ENCODE measurements at regions of chr16 and their contacts with region 1.

Region 1: GRCh38 chr16:20741554-20742285 is at the start of gene THUMPD1:
- DNase-seq: peak; percentile 96 to 99 (median 97)
- ATAC-seq: peak; percentile 94
- H3K4me3 ChIP-seq: peak within 1 kb of the TSS; percentile 100
- H3K4me3 Mint-ChIP-seq: peak within 1 kb of the TSS; percentile 98
- H3K27ac ChIP-seq: peak within 1 kb of the TSS; percentile 100
- H3K27ac Mint-ChIP-seq: peak within 1 kb of the TSS; percentile 99
- H3K4me1 ChIP-seq: peaks cover 27% of the 10 kb centered on the region
- H3K4me1 Mint-ChIP-seq: peaks cover 26% of the 10 kb centered on the region
- H3K27me3 ChIP-seq: no peaks in the 10 kb centered on the region
- H3K27me3 Mint-ChIP-seq: no peaks in the 10 kb centered on the region
- CTCF ChIP-seq: peak; percentile 23
- total RNA-seq, gene THUMPD1: 105 to 109 TPM

Region 2: GRCh38 chr16:18801197-18801972 is 1940.3 kb before region 1 on chr16 and contains the start of gene ARL6IP1:
- CTCF ChIA-PET with region 1: no interaction called
- POLR2A ChIA-PET with region 1: no interaction called
- intact Hi-C with region 1: loop called in 1 of 2 experiments (anchors 10 kb)
- DNase-seq: peak; percentile 96 to 100 (median 99)
- ATAC-seq: peak; percentile 94
- H3K4me3 ChIP-seq: peak within 1 kb of the TSS; percentile 86 to 98
- H3K4me3 Mint-ChIP-seq: peak within 1 kb of the TSS; percentile 97
- H3K27ac ChIP-seq: peak within 1 kb of the TSS; percentile 84 to 92
- H3K27ac Mint-ChIP-seq: peak within 1 kb of the TSS; percentile 97
- H3K4me1 ChIP-seq: peaks cover 44% of the 10 kb centered on the region
- H3K4me1 Mint-ChIP-seq: peaks cover 50% of the 10 kb centered on the region
- H3K27me3 ChIP-seq: no peaks in the 10 kb centered on the region
- H3K27me3 Mint-ChIP-seq: no peaks in the 10 kb centered on the region
- CTCF ChIP-seq: peak; percentile 75
- total RNA-seq, gene ARL6IP1: 137 to 138 TPM

Region 3: DNA sequence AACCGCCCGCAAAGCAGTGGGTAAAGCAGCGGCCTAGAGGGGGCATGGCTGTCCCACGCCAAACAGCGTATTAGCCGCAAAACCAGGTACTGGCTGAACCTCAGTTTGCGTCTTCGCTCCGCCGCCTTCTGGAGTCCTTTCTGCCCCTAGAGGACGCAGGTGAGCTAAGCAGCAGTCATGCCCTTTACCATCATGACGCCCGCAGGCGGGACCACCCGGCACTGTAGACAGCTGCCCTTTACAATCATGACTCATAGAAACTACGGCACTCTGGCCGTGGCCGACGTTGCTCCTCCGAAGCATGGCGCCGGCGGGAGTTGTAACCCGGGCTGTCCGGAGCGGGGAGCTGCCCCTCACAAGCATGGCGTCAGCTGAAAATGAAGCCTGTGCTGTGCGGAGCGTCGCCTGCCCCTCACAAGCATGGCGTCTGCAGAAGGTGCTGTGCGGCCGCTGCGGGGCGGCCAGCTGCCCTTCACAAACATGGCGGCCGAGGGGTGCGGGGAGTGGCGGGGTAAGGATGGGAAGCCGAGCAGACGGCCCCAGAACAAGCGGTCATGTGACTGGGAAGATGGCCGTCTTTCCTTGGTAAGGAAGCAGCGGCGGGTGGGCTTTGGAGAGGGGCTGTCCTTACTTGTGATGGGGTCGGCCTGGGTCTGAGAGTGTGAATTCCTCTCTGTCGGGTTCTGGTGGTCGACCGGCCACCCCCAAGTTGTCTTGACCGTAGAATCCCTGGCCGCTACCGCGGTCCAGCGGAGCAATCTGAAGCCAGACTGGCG is 1186.4 kb before region 1 on chr16 and contains the start of gene VPS35L:
- CTCF ChIA-PET with region 1: interaction called, 3 read pairs
- POLR2A ChIA-PET with region 1: no interaction called
- intact Hi-C with region 1: loop called in 1 of 2 experiments (anchors 10 kb)
- DNase-seq: peak; percentile 91 to 99 (median 97)
- ATAC-seq: peak; percentile 95
- H3K4me3 ChIP-seq: peak within 1 kb of the TSS; percentile 67 to 73
- H3K4me3 Mint-ChIP-seq: peak within 1 kb of the TSS; percentile 97
- H3K27ac ChIP-seq: peak within 1 kb of the TSS; percentile 66 to 81
- H3K27ac Mint-ChIP-seq: peak within 1 kb of the TSS; percentile 96
- H3K4me1 ChIP-seq: peaks cover 10% of the 10 kb centered on the region
- H3K4me1 Mint-ChIP-seq: peaks cover 28% of the 10 kb centered on the region
- H3K27me3 ChIP-seq: no peaks in the 10 kb centered on the region
- H3K27me3 Mint-ChIP-seq: no peaks in the 10 kb centered on the region
- CTCF ChIP-seq: peak; percentile 79
- total RNA-seq, gene VPS35L: 26.5 to 27.3 TPM

Region 4: GRCh38 chr16:20763461-20764232 is 21.9 kb after region 1 on chr16 and contains the start of gene ACSM3:
- CTCF ChIA-PET with region 1: interaction called, 3 read pairs
- POLR2A ChIA-PET with region 1: interaction called, 9 read pairs
- intact Hi-C with region 1: loop called (anchors 1 kb)
- DNase-seq: peak; percentile 34 to 88 (median 66)
- ATAC-seq: peak; percentile 98
- H3K4me3 ChIP-seq: peak within 1 kb of the TSS; percentile 51 to 58
- H3K4me3 Mint-ChIP-seq: peak within 1 kb of the TSS; percentile 96
- H3K27ac ChIP-seq: peak within 1 kb of the TSS; percentile 47 to 78
- H3K27ac Mint-ChIP-seq: peak within 1 kb of the TSS; percentile 95
- H3K4me1 ChIP-seq: peaks cover 20% of the 10 kb centered on the region
- H3K4me1 Mint-ChIP-seq: peaks cover 37% of the 10 kb centered on the region
- H3K27me3 ChIP-seq: no peaks in the 10 kb centered on the region
- H3K27me3 Mint-ChIP-seq: no peaks in the 10 kb centered on the region
- CTCF ChIP-seq: no peak
- total RNA-seq, gene ACSM3: 5.4 to 6.6 TPM

Region 5: GRCh38 chr16:20879175-20880040 is 137.7 kb after region 1 on chr16:
- CTCF ChIA-PET with region 1: no interaction called
- POLR2A ChIA-PET with region 1: no interaction called
- intact Hi-C with region 1: loop called in 1 of 2 experiments (anchors 10 kb)
- DNase-seq: no peak
- ATAC-seq: no peak
- H3K4me3 ChIP-seq: no peak overlapping the region
- H3K4me3 Mint-ChIP-seq: no peak overlapping the region
- H3K27ac ChIP-seq: no peak overlapping the region
- H3K27ac Mint-ChIP-seq: no peak overlapping the region
- H3K4me1 ChIP-seq: peaks cover 9% of the 10 kb centered on the region
- H3K4me1 Mint-ChIP-seq: peaks cover 32% of the 10 kb centered on the region
- H3K27me3 ChIP-seq: no peaks in the 10 kb centered on the region
- H3K27me3 Mint-ChIP-seq: no peaks in the 10 kb centered on the region
- CTCF ChIP-seq: no peak

Region 6: DNA sequence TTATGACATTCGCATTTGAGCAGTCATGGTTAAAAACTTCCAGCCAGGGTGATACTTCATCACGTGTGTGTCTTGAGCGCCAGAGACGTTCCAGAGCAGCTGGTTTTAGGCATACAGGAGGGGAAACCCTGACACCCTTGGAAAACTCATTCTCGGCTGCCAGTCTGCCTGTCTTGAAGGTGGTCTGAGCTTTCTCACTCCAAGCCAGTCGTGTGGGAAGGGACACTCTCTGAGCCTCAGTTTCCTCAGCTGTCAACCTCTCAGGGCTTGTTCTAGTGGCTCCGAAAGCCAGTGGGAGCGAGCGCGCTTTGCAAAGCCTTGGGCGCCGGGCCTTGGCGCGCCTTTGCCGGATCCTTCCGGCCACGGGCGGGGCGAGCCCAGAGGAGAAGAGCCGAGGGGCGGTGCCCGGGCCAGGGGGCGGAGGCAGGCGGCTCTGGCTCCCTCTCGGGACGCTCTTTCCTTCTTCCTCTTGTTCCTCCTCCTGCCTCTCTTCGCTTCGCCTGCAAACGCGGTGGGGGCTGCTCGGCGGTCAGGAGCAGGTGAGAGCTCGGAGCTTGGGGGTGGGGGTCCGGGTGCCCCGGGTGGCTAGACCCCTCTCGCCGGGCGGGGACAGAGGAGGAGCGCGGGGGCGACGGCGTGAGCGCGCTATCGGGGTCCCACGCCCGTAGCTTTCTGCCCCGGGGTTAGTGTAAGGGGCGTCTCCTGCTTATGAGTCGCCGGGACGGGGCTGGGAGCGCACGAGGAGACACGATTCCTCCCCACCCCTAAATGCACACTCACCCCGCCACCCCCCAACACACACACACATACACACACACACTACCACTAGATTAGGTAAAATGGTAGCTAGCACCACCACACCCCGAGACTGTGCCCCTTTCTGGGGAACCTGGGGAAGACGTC is 416.7 kb after region 1 on chr16 and contains the start of gene LDAF1:
- CTCF ChIA-PET with region 1: no interaction called
- POLR2A ChIA-PET with region 1: no interaction called
- intact Hi-C with region 1: loop called (anchors 1 to 2 kb)
- DNase-seq: peak; percentile 47 to 86 (median 75)
- ATAC-seq: peak; percentile 96
- H3K4me3 ChIP-seq: peak within 1 kb of the TSS; percentile 73 to 76
- H3K4me3 Mint-ChIP-seq: peak within 1 kb of the TSS; percentile 92
- H3K27ac ChIP-seq: peak within 1 kb of the TSS; percentile 17 to 54
- H3K27ac Mint-ChIP-seq: peak within 1 kb of the TSS; percentile 77
- H3K4me1 ChIP-seq: peaks cover 18% of the 10 kb centered on the region
- H3K4me1 Mint-ChIP-seq: peaks cover 31% of the 10 kb centered on the region
- H3K27me3 ChIP-seq: no peaks in the 10 kb centered on the region
- H3K27me3 Mint-ChIP-seq: no peaks in the 10 kb centered on the region
- CTCF ChIP-seq: no peak
- total RNA-seq, gene LDAF1: 7.7 to 7.9 TPM